Activated CD4-positive, alpha-beta T cell treated with anti-CD3 and anti-CD28 coated beads for 36 hours (primary cell): ENCODE measurements at regions of chr1 and their contacts with region 1.

Region 1: DNA sequence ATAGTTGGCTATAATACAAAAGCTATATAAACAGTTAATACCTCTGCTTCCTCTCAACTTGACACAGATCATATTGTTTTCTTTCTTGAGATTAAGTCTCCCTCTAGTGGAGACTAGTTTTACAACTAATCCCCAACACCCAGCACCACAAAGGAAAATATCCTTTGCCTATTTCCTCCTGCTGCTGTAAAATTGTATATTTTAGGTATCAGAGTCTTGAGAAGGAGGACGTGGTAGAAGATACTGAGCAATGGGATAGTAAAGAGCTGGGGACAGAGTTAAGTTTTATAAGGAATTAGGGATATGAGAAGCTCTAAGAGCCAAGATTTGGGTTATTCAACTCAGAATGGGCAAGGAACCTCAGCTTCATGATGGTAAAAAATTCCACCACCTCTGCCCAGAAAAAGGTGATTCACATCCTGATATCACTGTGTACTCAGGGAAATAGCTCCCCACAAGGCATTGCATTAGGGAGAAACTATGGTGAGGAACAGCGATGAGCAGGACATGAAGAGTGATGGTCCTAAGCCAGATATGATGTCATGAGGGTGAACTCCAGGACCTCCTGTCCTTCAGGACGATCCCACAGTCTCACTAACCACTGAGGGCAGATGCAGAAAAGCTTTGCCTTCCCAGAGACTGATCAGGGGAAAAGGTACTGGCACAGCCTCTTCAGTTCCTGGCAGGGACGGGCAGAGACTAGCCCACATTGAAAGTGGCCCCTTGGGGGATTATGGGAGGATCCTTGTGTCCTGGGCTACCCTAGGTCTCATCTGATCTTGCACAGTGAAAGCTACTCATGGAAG is 14.7 kb upstream of the CFAP126 start:
- DNase-seq: no peak
- ATAC-seq: peak; percentile 79
- H3K4me3 Mint-ChIP-seq: no peak overlapping the region
- H3K27ac Mint-ChIP-seq: peak overlapping the region; percentile 66
- H3K4me1 Mint-ChIP-seq: peaks cover 17% of the 10 kb centered on the region
- H3K27me3 Mint-ChIP-seq: no peaks in the 10 kb centered on the region

Region 2: DNA sequence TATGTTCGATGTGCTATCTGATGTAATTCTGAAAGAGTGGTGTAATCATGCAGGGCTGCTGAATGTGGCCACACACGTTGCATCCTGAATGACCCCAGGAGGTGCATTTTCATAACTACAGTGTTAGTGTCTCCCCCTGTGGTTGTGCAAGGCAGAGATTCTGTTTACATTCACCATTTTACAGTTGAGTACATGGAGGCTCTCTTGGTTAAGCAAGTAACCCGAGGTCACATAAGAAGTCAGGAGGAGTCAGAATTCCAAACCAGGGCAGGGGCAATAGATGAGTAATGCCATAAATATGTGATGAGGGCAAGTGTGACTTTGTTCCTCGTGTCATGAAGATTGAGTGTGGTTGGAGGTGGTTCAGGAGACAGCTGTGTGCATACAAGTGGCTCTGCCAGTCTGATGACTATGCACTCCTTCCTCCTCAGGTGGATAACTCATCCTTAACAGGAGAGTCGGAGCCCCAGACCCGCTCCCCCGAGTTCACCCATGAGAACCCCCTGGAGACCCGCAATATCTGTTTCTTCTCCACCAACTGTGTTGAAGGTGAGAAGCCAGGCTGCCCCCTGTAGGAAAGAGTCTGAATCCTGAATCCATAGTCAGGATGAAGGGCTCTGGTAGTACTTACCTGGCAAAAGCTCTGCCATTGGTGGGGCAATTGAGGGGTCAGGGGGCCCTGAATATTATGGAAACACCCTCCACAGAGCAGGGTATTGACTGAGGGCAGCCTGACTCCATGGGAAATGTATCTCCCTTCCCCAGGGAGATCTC is 1257.5 kb before region 1 on chr1:
- CTCF ChIA-PET with region 1: no interaction called
- POLR2A ChIA-PET with region 1: no interaction called
- intact Hi-C with region 1: no loop called
- DNase-seq: no peak
- ATAC-seq: no peak
- H3K4me3 Mint-ChIP-seq: no peak overlapping the region
- H3K27ac Mint-ChIP-seq: no peak overlapping the region
- H3K4me1 Mint-ChIP-seq: no peaks in the 10 kb centered on the region
- H3K27me3 Mint-ChIP-seq: peaks cover 2% of the 10 kb centered on the region

Region 3: GRCh38 chr1:160997323-160998038 is 384.9 kb before region 1 on chr1:
- CTCF ChIA-PET with region 1: no interaction called
- POLR2A ChIA-PET with region 1: no interaction called
- intact Hi-C with region 1: loop called in 1 of 2 experiments (anchors 5 kb)
- DNase-seq: peak; percentile 71
- ATAC-seq: peak; percentile 81
- H3K4me3 Mint-ChIP-seq: no peak overlapping the region
- H3K27ac Mint-ChIP-seq: peak overlapping the region; percentile 58
- H3K4me1 Mint-ChIP-seq: peaks cover 18% of the 10 kb centered on the region
- H3K27me3 Mint-ChIP-seq: no peaks in the 10 kb centered on the region

Region 4: DNA sequence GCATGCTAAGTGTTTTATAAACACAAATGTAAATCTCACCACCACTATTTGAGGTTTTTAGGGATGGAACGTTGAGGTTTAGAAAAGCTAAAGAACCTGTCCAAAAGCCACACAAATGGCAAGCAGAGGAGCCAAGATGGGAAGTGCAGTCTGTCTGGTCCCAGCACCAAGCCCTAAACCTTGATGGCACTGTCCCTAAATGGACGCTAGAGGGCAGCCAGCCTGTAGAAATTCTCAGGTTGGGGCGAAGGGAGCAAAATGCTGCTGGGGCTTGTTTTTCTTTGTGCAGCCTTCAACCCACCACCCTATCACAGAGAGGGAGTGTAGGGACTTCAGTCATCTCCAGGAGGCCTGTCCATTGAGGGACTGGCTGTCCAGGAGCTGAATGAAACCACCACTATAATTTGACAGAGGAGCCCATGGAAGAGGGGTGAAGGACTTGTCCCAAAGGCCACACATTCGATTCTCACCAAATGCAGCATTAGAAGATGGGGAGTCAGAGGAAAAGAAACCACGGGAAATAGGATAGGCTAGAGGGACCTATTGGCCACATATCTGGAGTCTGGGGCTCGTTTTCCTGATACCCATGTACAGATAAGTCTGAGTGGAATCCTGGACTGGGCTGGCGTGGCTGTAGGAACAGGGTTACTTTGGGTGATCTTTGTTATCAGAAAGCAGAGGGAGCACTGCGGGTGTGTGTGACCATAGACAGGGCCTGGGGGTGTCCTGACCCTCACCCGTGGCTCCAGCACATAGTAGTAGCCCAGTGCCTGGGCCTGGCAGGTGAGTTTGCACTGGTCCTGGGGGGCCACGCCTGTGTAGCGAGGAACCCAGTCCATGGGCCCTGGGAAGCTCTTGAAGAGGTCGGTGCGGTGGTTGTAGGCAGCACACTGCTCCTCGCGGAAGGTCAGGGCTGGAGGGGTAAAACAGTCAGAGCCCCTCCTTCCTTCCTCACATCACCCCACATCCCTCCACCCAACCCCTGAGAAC is 189.6 kb before region 1 on chr1:
- CTCF ChIA-PET with region 1: interaction called, 35 read pairs
- POLR2A ChIA-PET with region 1: no interaction called
- intact Hi-C with region 1: loop called (anchors 1 kb)
- DNase-seq: peak; percentile 81
- ATAC-seq: peak; percentile 96
- H3K4me3 Mint-ChIP-seq: no peak overlapping the region
- H3K27ac Mint-ChIP-seq: peak overlapping the region; percentile 74
- H3K4me1 Mint-ChIP-seq: peaks cover 22% of the 10 kb centered on the region
- H3K27me3 Mint-ChIP-seq: no peaks in the 10 kb centered on the region

Region 5: GRCh38 chr1:161305867-161306519 is 76.4 kb before region 1 on chr1:
- CTCF ChIA-PET with region 1: interaction called, 8 read pairs
- POLR2A ChIA-PET with region 1: no interaction called
- intact Hi-C with region 1: loop called (anchors 2 to 5 kb)
- DNase-seq: peak; percentile 91
- ATAC-seq: peak; percentile 98
- H3K4me3 Mint-ChIP-seq: peak overlapping the region; percentile 96
- H3K27ac Mint-ChIP-seq: peak overlapping the region; percentile 88
- H3K4me1 Mint-ChIP-seq: peaks cover 34% of the 10 kb centered on the region
- H3K27me3 Mint-ChIP-seq: no peaks in the 10 kb centered on the region

Region 6: GRCh38 chr1:161314201-161314981 is 68.0 kb before region 1 on chr1 and contains the start of gene SDHC:
- CTCF ChIA-PET with region 1: interaction called, 11 read pairs
- POLR2A ChIA-PET with region 1: no interaction called
- intact Hi-C with region 1: loop called in 1 of 2 experiments (anchors 5 kb)
- DNase-seq: peak; percentile 94
- ATAC-seq: peak; percentile 98
- H3K4me3 Mint-ChIP-seq: peak within 1 kb of the TSS; percentile 96
- H3K27ac Mint-ChIP-seq: peak within 1 kb of the TSS; percentile 96
- H3K4me1 Mint-ChIP-seq: peaks cover 21% of the 10 kb centered on the region
- H3K27me3 Mint-ChIP-seq: no peaks in the 10 kb centered on the region
- total RNA-seq, gene SDHC: 191 to 235 TPM

Region 7: DNA sequence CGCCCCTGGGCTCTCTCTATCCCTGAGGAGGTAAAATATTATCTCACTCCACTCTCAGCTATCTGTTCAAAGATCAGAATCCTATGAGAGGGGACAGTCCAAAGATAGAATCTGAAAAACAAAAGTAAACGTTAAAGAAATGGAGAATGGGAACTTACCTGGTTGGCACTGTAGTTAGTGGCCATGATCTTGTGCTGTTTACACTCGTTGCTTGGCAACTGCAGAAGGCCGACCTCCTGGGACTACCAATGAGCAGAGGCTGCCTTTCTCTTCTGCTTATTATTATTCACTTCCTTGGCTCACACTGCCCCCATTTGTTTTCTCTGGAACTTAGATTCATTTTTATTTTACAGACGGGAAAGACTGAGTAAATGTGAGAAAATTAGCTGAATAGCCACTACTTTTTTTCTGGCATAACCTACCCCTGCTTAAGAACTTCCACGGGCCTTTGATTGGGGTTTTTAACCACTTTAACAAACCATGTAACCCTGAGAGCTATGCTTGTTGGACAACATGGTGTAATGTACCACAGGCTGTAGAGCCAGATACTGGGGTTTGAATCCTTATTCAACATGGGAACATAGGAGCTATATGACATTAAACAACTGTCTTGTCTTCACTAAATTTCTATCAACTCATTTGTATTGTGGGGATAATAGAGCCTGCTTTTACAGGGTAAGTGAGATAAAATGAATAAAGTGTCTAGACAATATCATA is 14.6 kb before region 1 on chr1 and contains the start of gene CFAP126:
- CTCF ChIA-PET with region 1: interaction called, 23 read pairs
- POLR2A ChIA-PET with region 1: no interaction called
- intact Hi-C with region 1: no loop called
- DNase-seq: peak; percentile 60
- ATAC-seq: peak; percentile 99
- H3K4me3 Mint-ChIP-seq: no peak within 1 kb of the TSS
- H3K27ac Mint-ChIP-seq: peak within 1 kb of the TSS; percentile 17
- H3K4me1 Mint-ChIP-seq: peaks cover 19% of the 10 kb centered on the region
- H3K27me3 Mint-ChIP-seq: no peaks in the 10 kb centered on the region
- total RNA-seq, gene CFAP126: not detected